ENCODE measurements at regions of chr18 and their contacts with region 1.

Region 1: GRCh38 chr18:21897811-21898210 is 157.2 kb downstream of the MIB1 start:
- DNase-seq: peak in 2 of 10 donors; percentile 22 to 27

Region 2: GRCh38 chr18:21955757-21956652 is 58.2 kb after region 1 on chr18:
- intact Hi-C with region 1: loop called (anchors 2 kb)
- DNase-seq: peak; percentile 36 to 95 (median 78)

Region 3: DNA sequence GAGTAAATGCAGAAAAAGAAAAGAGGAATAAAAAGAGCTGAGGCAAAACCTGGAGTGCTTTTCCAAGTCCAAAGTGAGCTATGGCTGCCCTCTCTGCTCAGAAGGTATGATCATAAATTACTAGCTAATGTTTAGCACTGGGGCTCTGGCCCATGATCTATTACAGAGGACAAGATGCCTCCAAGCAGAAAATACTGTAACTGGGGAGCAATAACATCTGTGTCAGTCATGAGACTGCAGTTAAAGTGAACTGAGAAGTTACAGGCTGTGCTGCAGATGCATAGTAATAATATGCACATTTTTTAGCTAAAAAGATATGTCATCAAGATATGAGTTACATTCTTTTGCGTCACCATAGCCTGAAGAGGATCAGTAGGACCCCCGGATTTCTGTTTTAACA is 826.0 kb after region 1 on chr18:
- intact Hi-C with region 1: no loop called
- DNase-seq: no peak

Measured in posterior cingulate gyrus (tissue), 11 donors.